ENCODE measurements at regions of chr9 and their contacts with region 1.

Region 1: DNA sequence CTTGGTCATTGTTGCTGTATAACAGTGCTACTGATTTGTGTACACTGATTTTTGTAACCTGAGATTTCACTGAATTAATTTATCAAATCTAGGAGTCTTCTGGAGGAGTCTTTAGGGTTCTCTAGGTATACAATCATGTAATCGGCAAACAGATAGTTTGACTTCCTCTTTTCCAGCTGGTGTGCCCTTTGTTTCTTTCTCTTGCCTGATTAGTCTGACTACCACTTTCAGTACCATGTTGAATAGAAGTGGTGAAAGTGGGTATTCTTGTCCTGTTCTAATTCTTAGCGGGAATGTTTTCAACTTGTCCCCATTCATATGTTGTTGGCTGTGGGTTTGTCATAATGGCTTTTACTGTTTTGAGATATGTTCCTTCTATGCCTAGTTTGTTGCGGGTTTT is 24.7 kb upstream of the RANBP6 start:
- DNase-seq: no peak
- ATAC-seq: peak; percentile 91
- H3K4me3 ChIP-seq: no peak overlapping the region
- H3K27ac ChIP-seq: no peak overlapping the region
- H3K4me1 ChIP-seq: no peaks in the 10 kb centered on the region
- H3K27me3 ChIP-seq: no peaks in the 10 kb centered on the region
- CTCF ChIP-seq: no peak
- EP300 ChIP-seq: no peak
- POLR2A ChIP-seq: no peak
- RAD21 ChIP-seq: no peak

Region 2: GRCh38 chr9:5857928-5858327 is 182.1 kb before region 1 on chr9:
- CTCF ChIA-PET with region 1: no interaction called
- POLR2A ChIA-PET with region 1: no interaction called
- RAD21 ChIA-PET with region 1: no interaction called
- SMC1A ChIA-PET with region 1: no interaction called
- in situ Hi-C with region 1: no loop called
- intact Hi-C with region 1: no loop called
- DNase-seq: no peak
- ATAC-seq: no peak; the same call in 1 of the 3 replicates
- H3K4me3 ChIP-seq: no peak overlapping the region
- H3K27ac ChIP-seq: no peak overlapping the region
- H3K4me1 ChIP-seq: peaks cover 9% of the 10 kb centered on the region
- H3K27me3 ChIP-seq: no peaks in the 10 kb centered on the region
- CTCF ChIP-seq: no peak
- EP300 ChIP-seq: no peak
- POLR2A ChIP-seq: no peak
- RAD21 ChIP-seq: no peak

Region 3: GRCh38 chr9:6024020-6024554 is 16.0 kb before region 1 on chr9:
- CTCF ChIA-PET with region 1: interaction called, 10 read pairs
- POLR2A ChIA-PET with region 1: no interaction called
- RAD21 ChIA-PET with region 1: no interaction called
- SMC1A ChIA-PET with region 1: interaction called, 4 read pairs
- in situ Hi-C with region 1: no loop called
- intact Hi-C with region 1: no loop called
- DNase-seq: no peak
- ATAC-seq: peak; percentile 99
- H3K4me3 ChIP-seq: no peak overlapping the region
- H3K27ac ChIP-seq: no peak overlapping the region
- H3K4me1 ChIP-seq: no peaks in the 10 kb centered on the region
- H3K27me3 ChIP-seq: no peaks in the 10 kb centered on the region; a peak in 1 of 4 replicates
- CTCF ChIP-seq: peak; percentile 28 to 69 (median 61); a peak in 5 of 6 replicates
- EP300 ChIP-seq: no peak
- POLR2A ChIP-seq: no peak
- RAD21 ChIP-seq: no peak

Region 4: GRCh38 chr9:6090317-6090716 is 50.2 kb after region 1 on chr9:
- CTCF ChIA-PET with region 1: no interaction called
- POLR2A ChIA-PET with region 1: no interaction called
- RAD21 ChIA-PET with region 1: no interaction called
- SMC1A ChIA-PET with region 1: no interaction called
- in situ Hi-C with region 1: no loop called
- intact Hi-C with region 1: no loop called
- DNase-seq: no peak
- ATAC-seq: 0 out of 3 replicates have a peak, but pooled peaks have one; percentile 29
- H3K4me3 ChIP-seq: no peak overlapping the region
- H3K27ac ChIP-seq: no peak overlapping the region
- H3K4me1 ChIP-seq: no peaks in the 10 kb centered on the region
- H3K27me3 ChIP-seq: no peaks in the 10 kb centered on the region
- CTCF ChIP-seq: no peak
- EP300 ChIP-seq: no peak
- POLR2A ChIP-seq: no peak
- RAD21 ChIP-seq: no peak